Caco-2 (cell line): ENCODE measurements at regions of chr12 and their contacts with region 1.

Region 1: DNA sequence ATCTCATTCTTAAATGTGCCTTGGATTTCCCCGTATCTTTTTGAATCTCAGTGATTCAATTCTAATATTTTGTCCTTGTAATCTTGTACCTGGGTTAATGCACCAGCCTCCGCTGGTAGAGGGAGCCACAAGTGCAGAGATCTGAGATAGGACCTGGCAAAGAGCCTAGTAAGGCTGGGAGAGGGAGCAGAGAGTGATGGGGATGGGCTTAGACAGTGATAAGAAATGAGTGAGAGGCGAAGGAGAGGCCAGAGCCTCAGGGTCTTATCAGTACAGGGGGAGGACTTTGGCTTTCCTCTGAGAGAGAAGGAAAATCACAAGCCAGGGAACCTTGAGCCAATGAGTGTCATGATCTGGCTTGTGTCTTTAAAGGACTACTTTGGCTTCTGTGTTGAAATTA is 30.5 kb upstream of the LMNTD1 start:
- DNase-seq: peak; percentile 61 to 76
- H3K4me3 ChIP-seq: no peak overlapping the region
- H3K4me3 Mint-ChIP-seq: no peak overlapping the region
- H3K27ac Mint-ChIP-seq: no peak overlapping the region
- H3K4me1 ChIP-seq: 0 out of 2 replicates have a peak, but pooled peaks cover 6% of the 10 kb centered on the region
- H3K4me1 Mint-ChIP-seq: peaks cover 8% of the 10 kb centered on the region
- H3K27me3 ChIP-seq: no peaks in the 10 kb centered on the region
- H3K27me3 Mint-ChIP-seq: no peaks in the 10 kb centered on the region
- CTCF ChIP-seq: peak; percentile 18 to 45

Region 2: DNA sequence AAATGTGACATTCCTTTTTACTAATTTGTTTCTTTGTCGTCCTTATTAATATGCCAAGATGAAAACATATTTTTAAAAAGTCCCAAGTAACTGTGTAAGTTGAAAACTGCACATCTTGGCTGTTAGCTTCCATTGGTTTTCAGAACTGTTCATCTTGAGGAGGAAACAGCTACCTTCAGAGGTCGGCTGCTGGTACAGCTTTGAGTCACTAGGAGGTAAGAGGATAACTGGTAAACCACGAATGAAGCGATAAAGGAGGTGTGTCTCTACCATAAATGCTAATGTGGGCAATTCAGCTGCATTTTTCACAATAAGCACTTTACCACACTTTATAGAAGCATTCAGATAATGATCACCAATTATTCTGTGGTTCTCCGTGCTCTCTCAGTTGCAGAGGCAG is 195.4 kb before region 1 on chr12:
- CTCF ChIA-PET with region 1: no interaction called
- POLR2A ChIA-PET with region 1: no interaction called
- intact Hi-C with region 1: no loop called
- DNase-seq: no peak
- H3K4me3 ChIP-seq: no peak overlapping the region
- H3K4me3 Mint-ChIP-seq: no peak overlapping the region
- H3K27ac Mint-ChIP-seq: no peak overlapping the region
- H3K4me1 ChIP-seq: peaks cover 11% of the 10 kb centered on the region
- H3K4me1 Mint-ChIP-seq: peaks cover 22% of the 10 kb centered on the region
- H3K27me3 ChIP-seq: no peaks in the 10 kb centered on the region
- H3K27me3 Mint-ChIP-seq: no peaks in the 10 kb centered on the region
- CTCF ChIP-seq: no peak

Region 3: DNA sequence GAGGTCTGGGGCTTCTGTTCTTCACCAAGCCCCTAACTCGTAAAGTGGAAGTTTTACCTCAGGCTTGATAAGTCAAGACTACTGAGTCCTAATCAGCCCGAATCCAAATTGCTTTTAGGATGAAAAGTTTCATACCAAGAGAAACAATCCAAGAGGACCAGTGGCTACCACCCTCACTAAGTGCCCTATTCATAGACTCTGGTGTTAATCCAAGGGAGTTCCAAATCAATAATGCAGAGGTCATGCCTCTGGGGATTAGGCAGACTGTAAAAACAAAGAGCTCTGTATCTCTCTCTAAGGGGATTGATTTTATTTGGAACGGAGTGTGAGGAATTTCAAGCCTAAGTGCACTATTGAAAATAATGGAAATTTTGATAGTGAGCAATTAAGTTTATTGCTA is 45.8 kb after region 1 on chr12:
- CTCF ChIA-PET with region 1: no interaction called
- POLR2A ChIA-PET with region 1: no interaction called
- intact Hi-C with region 1: no loop called
- DNase-seq: no peak
- H3K4me3 ChIP-seq: no peak overlapping the region
- H3K4me3 Mint-ChIP-seq: no peak overlapping the region
- H3K27ac Mint-ChIP-seq: no peak overlapping the region
- H3K4me1 ChIP-seq: no peaks in the 10 kb centered on the region
- H3K4me1 Mint-ChIP-seq: no peaks in the 10 kb centered on the region
- H3K27me3 ChIP-seq: no peaks in the 10 kb centered on the region
- H3K27me3 Mint-ChIP-seq: no peaks in the 10 kb centered on the region
- CTCF ChIP-seq: no peak

Region 4: DNA sequence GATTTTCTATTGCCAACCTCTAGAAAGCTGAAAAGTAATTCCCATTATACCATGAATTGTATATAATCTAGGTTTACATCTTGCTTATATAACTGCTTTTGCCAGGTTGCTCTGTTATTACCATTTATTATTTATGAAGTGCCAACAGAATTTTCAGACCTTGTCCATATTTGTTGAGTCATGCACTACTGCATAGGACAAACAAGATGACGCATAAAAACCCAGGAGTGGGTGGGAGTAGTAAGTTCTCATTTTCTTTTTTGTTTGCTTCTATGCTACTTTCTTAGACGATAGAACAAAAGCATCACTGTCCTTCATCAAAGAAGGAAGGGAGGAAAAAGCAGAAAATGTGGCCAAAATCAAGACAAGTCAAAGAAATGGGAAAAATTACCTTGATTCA is 255.9 kb after region 1 on chr12:
- CTCF ChIA-PET with region 1: no interaction called
- POLR2A ChIA-PET with region 1: no interaction called
- intact Hi-C with region 1: loop called (anchors 10 kb)
- DNase-seq: no peak
- H3K4me3 ChIP-seq: no peak overlapping the region
- H3K4me3 Mint-ChIP-seq: no peak overlapping the region
- H3K27ac Mint-ChIP-seq: no peak overlapping the region
- H3K4me1 ChIP-seq: peaks cover 9% of the 10 kb centered on the region; the same call in 1 of the 2 replicates
- H3K4me1 Mint-ChIP-seq: peaks cover 21% of the 10 kb centered on the region
- H3K27me3 ChIP-seq: no peaks in the 10 kb centered on the region
- H3K27me3 Mint-ChIP-seq: no peaks in the 10 kb centered on the region
- CTCF ChIP-seq: no peak

Region 5: DNA sequence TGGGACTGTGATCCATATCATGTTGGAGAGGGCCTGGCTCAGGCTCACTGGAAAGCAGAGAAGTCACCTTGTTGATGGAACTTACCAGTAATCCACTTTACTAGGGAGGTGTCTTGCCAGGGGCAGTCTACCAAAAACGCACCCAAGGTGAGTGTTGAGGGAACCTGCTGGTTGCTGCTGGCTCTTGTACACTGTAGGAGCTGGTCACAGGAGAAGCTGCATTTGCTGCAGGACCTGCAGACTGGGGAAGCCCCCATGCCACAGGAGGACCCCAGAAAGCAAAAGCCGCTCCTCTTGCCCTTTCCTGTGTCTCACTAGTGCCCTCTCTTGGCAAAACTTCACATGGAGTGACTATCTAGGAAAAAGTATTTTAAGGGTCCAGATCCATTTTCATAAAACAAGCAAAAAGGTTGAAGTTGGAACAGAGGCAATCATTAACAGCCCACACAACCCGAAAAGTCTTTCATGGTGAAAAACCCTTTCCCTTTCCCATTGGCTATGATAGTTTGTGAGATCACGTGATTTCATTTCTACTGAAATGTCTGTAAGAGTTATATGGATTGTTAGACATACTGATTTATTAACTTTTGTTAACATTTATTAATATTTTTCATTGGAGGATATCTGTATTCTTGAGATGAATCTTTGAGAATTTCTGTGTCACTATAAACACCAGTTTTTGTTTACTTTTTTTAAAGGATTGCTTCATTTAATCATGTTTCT is 434.1 kb after region 1 on chr12:
- CTCF ChIA-PET with region 1: no interaction called
- POLR2A ChIA-PET with region 1: no interaction called
- intact Hi-C with region 1: loop called (anchors 2 kb)
- DNase-seq: peak; percentile 52 to 74
- H3K4me3 ChIP-seq: no peak overlapping the region
- H3K4me3 Mint-ChIP-seq: no peak overlapping the region
- H3K27ac Mint-ChIP-seq: no peak overlapping the region
- H3K4me1 ChIP-seq: no peaks in the 10 kb centered on the region
- H3K4me1 Mint-ChIP-seq: peaks cover 16% of the 10 kb centered on the region
- H3K27me3 ChIP-seq: no peaks in the 10 kb centered on the region
- H3K27me3 Mint-ChIP-seq: no peaks in the 10 kb centered on the region
- CTCF ChIP-seq: peak; percentile 75 to 90